ENCODE measurements at regions of chr1 and their contacts with region 1.

Region 1: DNA sequence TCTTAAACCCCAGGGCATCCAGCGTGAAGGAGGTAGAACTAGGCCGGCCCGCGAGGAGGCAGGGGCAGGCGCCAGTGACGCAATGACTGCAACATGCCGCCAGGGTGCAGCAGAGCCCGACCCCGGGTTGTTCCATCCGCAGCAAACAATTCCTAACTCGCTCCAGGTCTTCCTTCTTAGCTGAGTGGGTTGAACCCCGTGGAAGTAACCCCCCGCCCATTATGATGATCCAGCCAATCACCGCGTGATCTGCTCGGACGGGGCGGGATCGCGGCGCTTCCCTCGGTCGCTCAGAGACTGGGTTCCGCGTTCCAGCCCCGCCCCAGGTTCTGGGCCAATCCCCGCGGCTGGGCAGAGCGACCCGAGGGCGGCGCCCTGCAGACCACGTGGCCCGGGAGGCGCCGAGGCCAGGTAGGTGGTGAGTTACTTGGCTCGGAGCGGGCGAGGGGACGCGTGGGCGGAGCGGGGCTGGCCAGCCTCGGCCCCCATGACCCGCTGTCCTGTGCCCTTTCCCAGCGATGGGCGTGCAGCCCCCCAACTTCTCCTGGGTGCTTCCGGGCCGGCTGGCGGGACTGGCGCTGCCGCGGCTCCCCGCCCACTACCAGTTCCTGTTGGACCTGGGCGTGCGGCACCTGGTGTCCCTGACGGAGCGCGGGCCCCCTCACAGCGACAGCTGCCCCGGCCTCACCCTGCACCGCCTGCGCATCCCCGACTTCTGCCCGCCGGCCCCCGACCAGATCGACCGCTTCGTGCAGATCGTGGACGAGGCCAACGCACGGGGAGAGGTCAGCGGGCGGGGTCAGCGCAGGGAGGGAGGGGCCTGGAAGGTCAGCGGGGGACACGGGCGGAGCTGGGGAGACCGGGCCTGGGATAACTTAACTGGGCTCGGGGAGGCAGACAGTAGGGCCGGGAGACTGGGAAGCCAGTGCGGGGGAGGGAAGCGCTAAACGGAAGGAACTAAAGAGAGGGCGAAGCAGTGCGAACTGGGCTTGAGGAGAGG is at the start of gene DUSP23:
- DNase-seq: peak; percentile 98
- CTCF ChIP-seq: peak; percentile 90

Region 2: DNA sequence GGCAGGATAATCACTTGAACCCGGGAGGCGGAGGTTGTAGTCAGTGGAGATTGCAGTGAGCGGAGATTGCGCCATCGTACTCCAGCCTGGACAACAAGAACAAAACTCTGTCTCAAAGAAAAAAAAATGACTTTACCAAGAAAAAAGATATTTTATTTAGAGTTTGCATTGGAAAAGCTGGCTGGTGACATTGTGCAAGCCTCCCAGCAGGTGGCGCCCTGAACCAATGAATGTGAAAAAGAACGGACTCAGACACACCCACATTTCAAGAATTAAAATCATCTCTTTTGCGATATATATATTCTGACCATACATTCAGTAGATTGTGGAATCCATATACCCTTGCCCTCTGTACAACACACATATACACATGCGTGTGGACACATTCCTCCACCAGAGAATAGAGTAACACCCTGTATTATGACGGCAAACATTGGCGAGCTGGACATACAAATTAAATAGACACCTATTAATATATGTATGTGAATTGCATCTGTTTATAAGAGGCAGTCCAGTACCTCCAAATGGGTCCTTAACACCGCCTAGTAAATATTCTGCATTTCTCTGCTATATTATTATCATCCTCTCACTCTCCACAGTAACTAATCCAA is 648.5 kb before region 1 on chr1:
- in situ Hi-C with region 1: loop called (anchors 25 kb)
- DNase-seq: peak; percentile 53
- CTCF ChIP-seq: peak; percentile 83

Region 3: DNA sequence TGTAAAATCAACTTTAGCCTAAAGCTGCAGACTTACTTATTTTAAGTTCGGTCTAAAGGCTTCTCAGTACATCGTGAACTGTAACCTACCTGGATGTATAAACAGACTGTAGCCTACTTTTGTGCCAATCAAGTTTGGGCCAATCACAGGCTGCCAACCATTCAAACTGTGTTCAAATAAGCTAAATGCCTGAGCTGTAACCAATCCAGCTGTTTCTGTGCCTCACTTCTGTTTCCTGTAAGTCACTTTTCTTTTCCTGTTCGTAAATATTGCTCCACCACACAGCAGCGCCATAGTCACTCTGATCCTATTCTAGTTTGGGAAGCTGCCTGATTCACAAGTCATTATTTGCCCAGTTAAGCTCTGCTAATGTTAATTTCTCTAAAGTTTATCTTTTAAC is 210.6 kb after region 1 on chr1:
- in situ Hi-C with region 1: no loop called
- DNase-seq: no peak
- CTCF ChIP-seq: no peak

Region 4: DNA sequence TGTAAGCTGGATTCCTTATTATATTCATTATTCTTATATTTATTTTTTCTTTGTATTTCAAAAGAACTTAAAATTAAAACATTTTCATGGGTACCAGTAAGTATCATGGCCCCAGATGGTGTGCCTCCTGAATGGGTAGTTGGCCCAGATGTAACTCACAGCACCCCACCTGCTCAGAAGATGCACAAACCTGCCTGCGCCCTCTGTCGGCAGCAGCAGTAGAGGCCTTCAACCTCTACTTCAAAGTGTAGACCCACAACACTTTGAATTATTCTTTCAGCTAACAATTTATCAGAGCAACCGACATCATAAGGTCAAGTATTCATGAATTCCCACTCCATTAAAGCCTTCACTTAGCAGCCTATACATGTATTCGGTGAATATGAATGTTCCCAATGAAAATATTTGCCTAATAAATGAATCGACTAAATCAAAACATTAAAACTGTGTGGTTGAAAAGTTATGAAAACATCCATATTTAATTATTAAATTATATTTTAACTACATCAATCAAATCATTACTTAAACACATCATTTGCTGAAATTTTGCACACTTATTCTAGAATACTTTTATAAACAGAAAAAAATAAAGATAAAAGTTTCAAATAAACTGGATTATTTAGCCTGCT is 225.5 kb after region 1 on chr1:
- in situ Hi-C with region 1: loop called (anchors 25 kb)
- DNase-seq: peak; percentile 80
- CTCF ChIP-seq: peak; percentile 91

Region 5: GRCh38 chr1:160046494-160047110 is 265.7 kb after region 1 on chr1:
- in situ Hi-C with region 1: no loop called
- DNase-seq: peak; percentile 81
- CTCF ChIP-seq: peak; percentile 54